Right ventricle myocardium inferior (tissue), 1 donor: ENCODE measurements at regions of chr6 and their contacts with region 1.

Region 1: GRCh38 chr6:131909408-131910218 is 41.6 kb downstream of the CCN2 start:
- DNase-seq: no peak
- ATAC-seq: peak; percentile 75

Region 2: DNA sequence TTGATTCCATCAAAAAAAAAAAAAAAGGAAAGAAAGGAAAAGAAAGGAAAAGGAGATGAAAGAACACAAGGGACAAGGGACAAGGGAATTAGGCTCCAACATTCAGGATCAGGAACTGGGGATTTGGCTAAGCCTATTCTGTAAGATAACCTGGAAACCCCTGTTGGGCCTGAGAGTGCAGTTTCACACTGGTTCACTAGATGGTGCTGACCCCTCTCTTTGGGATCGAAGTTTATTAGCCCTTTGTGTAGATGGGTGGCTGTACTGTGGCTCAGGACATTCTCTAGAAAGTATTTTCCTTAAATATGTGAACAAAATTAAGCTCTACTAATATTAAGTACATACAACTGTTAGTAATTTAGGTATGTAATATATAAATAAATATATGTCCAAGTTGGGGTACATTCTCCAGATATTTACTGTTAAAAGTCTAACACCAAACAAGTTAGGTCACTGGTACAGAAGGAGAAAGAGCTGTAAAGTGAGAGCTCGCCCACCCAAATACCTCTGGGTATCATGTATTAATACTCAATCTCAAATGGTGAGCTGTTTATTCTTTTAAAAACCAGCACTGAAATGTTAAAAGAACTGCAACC is 214.7 kb before region 1 on chr6:
- intact Hi-C with region 1: loop called (anchors 5 kb)
- DNase-seq: no peak
- ATAC-seq: peak; percentile 75

Region 3: GRCh38 chr6:131782764-131783163 is 126.8 kb before region 1 on chr6:
- intact Hi-C with region 1: loop called (anchors 5 kb)
- DNase-seq: no peak
- ATAC-seq: no peak